ENCODE measurements at regions of chr5 and their contacts with region 1.

Region 1: DNA sequence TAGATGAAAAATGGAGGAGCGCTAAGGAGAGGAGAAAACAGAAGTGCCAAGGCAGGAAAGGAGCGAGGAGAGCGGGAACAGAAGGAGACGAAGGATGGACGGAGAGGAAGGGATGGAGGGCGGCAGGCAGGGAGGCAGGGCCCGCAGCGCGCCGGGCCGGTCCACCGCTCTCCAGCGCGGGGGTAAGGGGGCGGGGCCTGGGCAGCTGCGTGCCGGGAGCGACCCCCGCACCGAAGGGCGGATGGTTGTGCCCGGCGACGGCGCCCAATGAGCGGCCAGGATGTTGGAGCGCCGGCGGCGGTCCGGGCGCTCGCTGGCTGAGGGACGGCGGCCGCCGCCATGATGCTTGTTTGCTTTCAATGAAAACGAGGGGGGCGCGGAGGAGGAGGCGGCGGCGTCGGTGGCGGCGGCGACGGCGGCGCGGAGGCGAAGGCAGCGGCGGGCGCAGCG is at the start of gene CNOT6:
- DNase-seq: peak; percentile 92
- H3K4me3 Mint-ChIP-seq: peak within 1 kb of the TSS; percentile 94
- H3K27ac Mint-ChIP-seq: peak within 1 kb of the TSS; percentile 90
- H3K4me1 Mint-ChIP-seq: peaks cover 24% of the 10 kb centered on the region
- H3K27me3 Mint-ChIP-seq: no peaks in the 10 kb centered on the region
- total RNA-seq, gene CNOT6: 43.2 and 48.9 TPM in 2 replicates

Region 2: DNA sequence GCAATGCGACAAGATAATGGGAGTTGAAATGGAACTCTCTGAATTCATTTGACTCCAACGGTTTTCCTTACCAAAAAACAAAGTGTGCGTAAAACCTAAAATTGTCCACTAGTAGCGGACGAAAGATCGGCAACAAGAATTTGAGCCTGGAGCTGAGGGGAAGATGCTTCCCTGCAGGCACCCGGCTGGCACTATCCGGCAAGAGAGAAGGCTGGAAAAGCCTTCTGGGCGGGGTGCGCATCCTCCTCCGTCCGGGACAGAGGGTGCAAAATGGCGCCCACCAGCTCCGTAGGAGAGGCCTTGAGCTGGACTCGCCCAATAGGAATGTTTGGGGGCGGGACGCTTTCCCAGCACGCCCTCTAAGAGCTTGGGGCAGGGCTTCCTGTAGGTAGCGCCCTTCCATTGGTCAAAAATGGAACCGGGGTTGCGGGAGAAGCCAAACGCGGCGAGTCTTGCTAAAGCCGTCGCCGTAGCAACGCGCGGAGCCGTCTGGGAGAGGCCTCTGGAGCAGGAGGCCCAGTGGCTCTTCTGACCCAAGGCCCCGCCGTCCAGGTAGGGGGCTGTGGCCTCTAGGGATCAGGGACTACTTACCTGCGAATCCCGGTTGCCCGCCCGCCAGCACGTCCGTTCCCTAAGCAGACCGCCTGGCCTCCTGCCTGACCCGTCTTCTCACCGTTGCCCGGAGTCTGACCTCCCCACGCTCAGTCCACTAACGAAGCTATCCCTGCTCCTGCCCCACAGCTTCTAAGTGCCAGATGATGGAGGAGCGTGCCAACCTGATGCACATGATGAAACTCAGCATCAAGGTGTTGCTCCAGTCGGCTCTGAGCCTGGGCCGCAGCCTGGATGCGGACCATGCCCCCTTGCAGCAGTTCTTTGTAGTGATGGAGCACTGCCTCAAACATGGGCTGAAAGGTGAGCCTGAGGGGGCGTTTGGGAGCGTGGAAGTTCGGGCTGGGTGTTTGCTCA is 934.5 kb before region 1 on chr5:
- intact Hi-C with region 1: loop called (anchors 10 kb)
- DNase-seq: peak; percentile 92
- H3K4me3 Mint-ChIP-seq: peak overlapping the region; percentile 90
- H3K27ac Mint-ChIP-seq: peak overlapping the region; percentile 77
- H3K4me1 Mint-ChIP-seq: peaks cover 20% of the 10 kb centered on the region
- H3K27me3 Mint-ChIP-seq: no peaks in the 10 kb centered on the region

Region 3: DNA sequence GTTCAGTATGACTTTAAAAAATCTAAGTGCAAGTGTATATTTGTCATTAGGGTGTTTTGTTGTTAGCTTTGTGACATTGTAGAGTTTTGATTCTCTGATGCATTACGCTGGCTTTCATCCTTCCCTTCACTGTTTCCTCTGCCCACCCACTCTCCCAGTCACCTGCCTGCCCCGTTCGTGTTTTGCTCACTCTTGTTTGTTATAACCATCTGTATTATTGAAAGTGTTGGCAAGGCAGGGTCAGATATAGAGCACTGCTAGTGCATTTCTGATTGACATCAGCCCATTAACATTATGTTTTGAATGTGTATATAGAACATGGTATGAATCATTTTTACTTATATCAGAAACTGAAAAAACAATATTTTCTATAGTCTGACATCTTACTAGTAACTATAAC is 69.9 kb after region 1 on chr5:
- intact Hi-C with region 1: loop called (anchors 5 kb)
- DNase-seq: no peak
- H3K4me3 Mint-ChIP-seq: no peak overlapping the region
- H3K27ac Mint-ChIP-seq: no peak overlapping the region
- H3K4me1 Mint-ChIP-seq: peaks cover 37% of the 10 kb centered on the region
- H3K27me3 Mint-ChIP-seq: no peaks in the 10 kb centered on the region

Region 4: GRCh38 chr5:180605554-180606214 is 111.6 kb after region 1 on chr5:
- intact Hi-C with region 1: loop called (anchors 10 kb)
- DNase-seq: peak; percentile 39
- H3K4me3 Mint-ChIP-seq: no peak overlapping the region
- H3K27ac Mint-ChIP-seq: no peak overlapping the region
- H3K4me1 Mint-ChIP-seq: no peaks in the 10 kb centered on the region
- H3K27me3 Mint-ChIP-seq: no peaks in the 10 kb centered on the region

Measured in activated T-helper 2 cell treated with anti-CD3 and anti-CD28 coated beads, Interferon-gamma antibody, Interleukin-2, Interleukin-4, amounts not matched to agents 10 μg/mL and 5 μg/mL and 100 μg/mL, durations not matched to agents 14 hours and 24 hours and 36 hours (primary cell).